Activated CD4-positive, alpha-beta memory T cell treated with anti-CD3 and anti-CD28 coated beads, Interleukin-2, amount 10 ng/mL, durations not matched to agents 7 days and 5 days (primary cell): ENCODE measurements at regions of chr11 and their contacts with region 1.

Region 1: GRCh38 chr11:10792398-10792975 is 16.2 kb downstream of the EIF4G2 start:
- DNase-seq: peak; percentile 86
- H3K4me3 Mint-ChIP-seq: no peak overlapping the region
- H3K27ac Mint-ChIP-seq: no peak overlapping the region
- H3K4me1 Mint-ChIP-seq: peaks cover 25% of the 10 kb centered on the region
- H3K27me3 Mint-ChIP-seq: peaks cover 5% of the 10 kb centered on the region

Region 2: GRCh38 chr11:10777806-10778205 is 14.7 kb before region 1 on chr11:
- CTCF ChIA-PET with region 1: interaction called, 13 read pairs
- POLR2A ChIA-PET with region 1: no interaction called
- DNase-seq: no peak
- H3K4me3 Mint-ChIP-seq: no peak overlapping the region
- H3K27ac Mint-ChIP-seq: no peak overlapping the region
- H3K4me1 Mint-ChIP-seq: peaks cover 8% of the 10 kb centered on the region
- H3K27me3 Mint-ChIP-seq: no peaks in the 10 kb centered on the region

Region 3: DNA sequence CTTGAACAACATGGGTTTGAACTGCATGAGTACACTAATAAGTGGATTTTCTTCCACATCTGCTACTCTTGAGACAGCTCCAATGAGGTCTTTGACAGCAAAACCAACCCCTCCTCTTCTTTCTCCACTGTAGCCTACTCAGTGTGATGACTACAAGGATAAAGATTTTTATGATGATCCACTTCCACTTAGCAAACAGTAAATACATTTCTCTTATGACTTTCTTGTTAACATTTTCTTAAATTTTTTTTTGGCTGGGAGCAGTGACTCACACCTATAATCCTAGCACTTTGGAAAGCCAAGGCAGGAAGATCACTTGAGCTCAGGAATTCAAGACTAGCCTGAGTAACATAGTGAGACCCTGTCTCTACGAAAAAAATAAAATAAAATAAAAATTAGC is 26.1 kb after region 1 on chr11:
- CTCF ChIA-PET with region 1: interaction called, 10 read pairs
- POLR2A ChIA-PET with region 1: no interaction called
- DNase-seq: no peak
- H3K4me3 Mint-ChIP-seq: no peak overlapping the region
- H3K27ac Mint-ChIP-seq: no peak overlapping the region
- H3K4me1 Mint-ChIP-seq: peaks cover 8% of the 10 kb centered on the region
- H3K27me3 Mint-ChIP-seq: peaks cover 11% of the 10 kb centered on the region

Region 4: DNA sequence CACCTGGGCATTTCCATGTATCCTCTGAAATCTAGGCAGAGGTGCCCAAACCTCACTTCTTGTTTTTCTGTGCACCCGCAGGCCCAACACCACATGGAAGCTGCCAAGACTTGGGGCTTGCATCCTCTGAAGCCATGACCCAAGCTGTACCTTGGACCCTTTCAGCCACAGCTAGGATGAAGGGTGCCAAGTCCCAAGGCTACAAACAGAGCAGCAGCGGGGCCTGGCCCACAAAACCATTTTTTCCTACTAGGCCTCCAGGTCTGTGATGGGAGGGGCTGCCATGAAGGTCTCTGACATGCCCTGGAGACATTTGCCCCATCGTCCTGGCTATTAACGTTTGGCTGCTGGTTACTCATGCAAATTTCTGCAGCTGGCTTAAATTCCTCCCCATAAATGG is 36.7 kb after region 1 on chr11:
- CTCF ChIA-PET with region 1: no interaction called
- POLR2A ChIA-PET with region 1: no interaction called
- DNase-seq: no peak
- H3K4me3 Mint-ChIP-seq: no peak overlapping the region
- H3K27ac Mint-ChIP-seq: no peak overlapping the region
- H3K4me1 Mint-ChIP-seq: no peaks in the 10 kb centered on the region
- H3K27me3 Mint-ChIP-seq: no peaks in the 10 kb centered on the region

Region 5: DNA sequence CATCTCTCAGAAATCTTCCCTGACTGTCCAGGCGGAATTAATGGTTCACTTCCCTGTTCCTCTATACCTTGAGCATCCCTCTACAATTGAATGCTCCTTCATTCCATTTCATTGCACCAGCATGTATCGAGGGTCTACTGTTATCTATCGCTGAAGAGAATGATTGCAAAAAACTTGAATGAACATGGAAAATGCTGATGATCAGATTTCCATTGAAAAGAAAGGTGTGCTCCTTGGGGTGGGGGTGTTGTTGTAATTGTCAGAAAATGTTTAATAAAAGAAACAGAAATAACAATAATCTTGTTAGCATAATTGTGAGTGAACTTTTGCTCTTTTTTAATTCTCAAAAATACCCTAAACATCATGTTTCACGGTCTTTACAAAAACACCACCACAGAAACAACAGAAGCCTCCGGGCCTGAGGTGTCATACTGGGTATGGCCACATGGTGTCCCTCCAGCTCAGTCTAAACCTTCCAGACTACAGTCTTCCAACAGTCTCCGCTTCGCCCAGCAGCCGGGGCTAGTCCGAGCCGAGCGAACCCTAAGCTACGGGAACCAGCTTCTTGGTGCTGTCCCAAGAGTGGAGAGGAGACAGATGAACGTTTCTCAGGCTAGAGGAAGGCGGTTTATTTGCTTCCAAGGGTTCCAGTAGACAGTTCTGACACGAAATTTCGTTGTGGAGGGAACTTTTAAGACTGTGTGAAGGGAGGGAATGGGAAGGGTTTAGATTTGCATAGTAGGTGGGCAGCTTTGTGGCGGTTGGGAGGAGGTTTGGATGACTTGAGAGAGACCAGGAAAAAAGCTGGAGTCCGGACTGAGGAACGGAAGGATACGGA is 141.2 kb after region 1 on chr11:
- CTCF ChIA-PET with region 1: interaction called, 32 read pairs
- POLR2A ChIA-PET with region 1: interaction called, 3 read pairs
- DNase-seq: peak; percentile 83
- H3K4me3 Mint-ChIP-seq: peak overlapping the region; percentile 63
- H3K27ac Mint-ChIP-seq: no peak overlapping the region
- H3K4me1 Mint-ChIP-seq: peaks cover 15% of the 10 kb centered on the region
- H3K27me3 Mint-ChIP-seq: peaks cover 49% of the 10 kb centered on the region

Region 6: DNA sequence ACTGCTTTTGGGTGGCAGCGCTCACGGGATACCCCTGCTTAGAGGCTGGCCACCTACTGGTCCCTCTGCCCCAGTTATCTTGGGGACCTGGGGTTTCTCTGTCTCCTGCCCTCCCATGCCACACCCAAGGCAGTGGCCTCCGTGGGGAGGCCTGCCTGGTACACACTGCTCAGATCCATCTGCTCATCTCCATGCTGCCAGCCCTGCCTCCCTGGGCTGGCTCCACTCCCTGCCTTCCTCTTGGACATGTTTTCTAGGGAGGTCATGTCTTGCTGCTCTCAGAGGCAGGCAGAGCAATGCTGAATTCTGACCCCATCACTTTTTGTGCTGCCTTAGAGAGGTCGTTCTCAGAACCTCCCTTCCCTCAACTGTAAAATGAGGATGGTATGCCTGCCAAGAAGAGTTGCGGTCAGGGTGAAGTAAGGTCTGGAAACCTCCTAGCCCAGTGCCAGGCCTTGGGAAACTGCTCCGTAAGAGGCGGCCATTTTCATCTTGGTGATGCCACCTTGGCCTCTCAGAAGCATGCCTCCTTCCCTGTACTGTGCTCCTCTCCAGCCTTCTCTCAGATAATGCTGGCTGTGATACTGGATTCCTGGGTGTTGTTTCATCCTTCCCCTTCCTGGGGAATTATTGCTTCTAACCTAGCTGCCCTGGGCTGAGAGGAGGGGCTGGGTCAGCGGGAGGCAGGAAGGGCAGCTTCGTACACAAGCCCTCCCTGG is 251.8 kb after region 1 on chr11:
- CTCF ChIA-PET with region 1: no interaction called
- POLR2A ChIA-PET with region 1: no interaction called
- DNase-seq: no peak
- H3K4me3 Mint-ChIP-seq: no peak overlapping the region
- H3K27ac Mint-ChIP-seq: no peak overlapping the region
- H3K4me1 Mint-ChIP-seq: no peaks in the 10 kb centered on the region
- H3K27me3 Mint-ChIP-seq: no peaks in the 10 kb centered on the region